BJ (cell line): ENCODE measurements at regions of chr10 and their contacts with region 1.

Region 1: GRCh38 chr10:5829267-5829666 is 16.0 kb upstream of the GDI2 start:
- DNase-seq: no peak
- H3K4me3 ChIP-seq: no peak overlapping the region
- H3K27me3 ChIP-seq: no peaks in the 10 kb centered on the region
- CTCF ChIP-seq: no peak

Region 2: GRCh38 chr10:5813287-5814109 is 15.8 kb before region 1 on chr10 and contains the start of gene GDI2:
- CTCF ChIA-PET with region 1: interaction called, 4 read pairs
- POLR2A ChIA-PET with region 1: interaction called, 10 read pairs
- DNase-seq: peak; percentile 69
- H3K4me3 ChIP-seq: peak within 1 kb of the TSS; percentile 96
- H3K27me3 ChIP-seq: no peaks in the 10 kb centered on the region
- CTCF ChIP-seq: no peak
- polyA plus RNA-seq, gene GDI2: 148 and 225 TPM in 2 replicates

Region 3: DNA sequence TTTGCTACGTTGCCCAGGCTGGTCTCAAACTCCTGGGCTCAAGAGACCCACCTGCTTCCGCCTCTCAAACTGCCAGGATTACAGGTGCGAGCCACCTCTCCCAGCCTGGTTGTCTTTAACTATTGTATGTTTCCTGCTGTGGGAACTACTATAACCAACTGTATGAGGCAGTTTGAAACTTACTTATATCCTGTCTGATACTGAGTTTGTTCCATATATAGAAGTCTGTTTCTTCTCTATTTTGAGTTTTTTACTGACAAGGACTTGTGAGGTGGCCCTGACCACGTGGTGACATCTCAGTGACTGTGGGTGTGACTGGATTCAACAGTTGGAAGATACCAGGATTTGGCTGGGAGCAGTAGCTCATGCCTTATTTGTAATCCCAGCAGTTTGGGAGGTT is 75.0 kb after region 1 on chr10:
- CTCF ChIA-PET with region 1: no interaction called
- POLR2A ChIA-PET with region 1: no interaction called
- DNase-seq: no peak
- H3K4me3 ChIP-seq: no peak overlapping the region
- H3K27me3 ChIP-seq: no peaks in the 10 kb centered on the region
- CTCF ChIP-seq: no peak